AG04449 (cell line): ENCODE measurements at regions of chr1 and their contacts with region 1.

Region 1: DNA sequence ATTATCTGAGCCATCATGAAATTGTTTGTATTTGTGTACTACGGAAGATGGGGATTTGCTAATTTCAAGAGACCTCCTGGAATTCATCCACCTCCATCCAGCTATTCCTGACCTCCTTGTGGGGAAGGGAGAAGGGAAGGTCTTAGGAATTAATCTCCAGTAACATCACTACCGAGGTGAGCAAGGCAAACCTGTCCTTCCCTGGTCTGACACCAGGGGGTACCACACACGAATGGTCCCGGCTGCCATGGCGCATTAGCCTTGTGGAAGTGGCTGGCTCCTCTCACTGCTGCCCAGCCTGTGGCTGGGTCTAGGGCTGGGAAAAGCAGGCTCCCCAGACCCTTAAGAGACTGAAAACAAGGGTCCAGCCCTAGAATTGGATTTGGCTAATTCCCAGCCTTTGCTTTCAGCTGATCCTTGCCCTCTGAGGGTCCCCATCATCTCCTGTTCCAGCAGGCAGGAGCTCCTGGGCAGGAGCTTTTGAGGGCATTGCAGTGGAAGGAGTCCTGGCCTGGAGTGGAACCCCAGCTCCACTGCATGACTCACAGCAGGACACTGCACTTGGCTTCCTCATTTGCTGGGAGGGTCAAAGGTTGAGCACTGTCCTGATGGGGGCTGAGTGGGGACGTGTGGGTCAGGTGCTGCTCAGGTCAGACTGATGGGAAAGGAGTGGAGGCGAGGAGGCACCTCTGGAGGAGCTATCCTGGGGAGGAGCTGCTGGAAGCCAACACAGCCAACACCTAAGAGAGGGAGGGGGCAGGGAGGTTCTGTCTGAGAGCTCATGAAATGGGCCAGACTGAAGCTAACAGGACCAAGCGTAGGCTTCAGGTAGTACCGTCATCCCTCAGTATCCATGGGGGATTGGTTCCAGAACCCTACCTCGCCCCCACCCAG is 34.7 kb downstream of the RIMS3 start:
- DNase-seq: no peak
- H3K4me3 ChIP-seq: no peak overlapping the region
- CTCF ChIP-seq: peak; percentile 66

Region 2: DNA sequence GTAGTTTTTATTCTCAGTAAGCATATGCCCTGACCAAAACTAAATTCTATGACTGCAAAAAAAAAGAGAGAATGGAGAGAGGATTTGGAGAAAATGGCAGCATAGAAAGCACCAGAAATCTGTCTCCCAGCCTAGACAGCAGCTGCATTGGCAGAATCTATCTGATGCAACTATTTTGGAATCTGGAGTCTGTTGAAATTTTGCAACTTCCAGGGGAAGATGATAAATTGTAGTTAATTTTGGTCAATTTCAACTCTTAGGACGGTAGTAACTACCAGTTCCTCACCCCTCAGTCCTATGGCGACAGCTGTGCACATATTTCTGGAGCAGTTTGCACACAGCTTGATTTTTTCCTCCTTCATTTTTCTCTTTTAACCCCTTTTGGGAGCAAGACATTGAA is 111.2 kb before region 1 on chr1:
- CTCF ChIA-PET with region 1: no interaction called
- POLR2A ChIA-PET with region 1: no interaction called
- DNase-seq: no peak
- H3K4me3 ChIP-seq: no peak overlapping the region
- CTCF ChIP-seq: no peak

Region 3: GRCh38 chr1:40612345-40612831 is 18.3 kb before region 1 on chr1:
- CTCF ChIA-PET with region 1: interaction called, 11 read pairs
- POLR2A ChIA-PET with region 1: no interaction called
- DNase-seq: no peak
- H3K4me3 ChIP-seq: no peak overlapping the region
- CTCF ChIP-seq: peak; percentile 80